AG04450 (cell line): ENCODE measurements at regions of chr4 and their contacts with region 1.

Region 1: DNA sequence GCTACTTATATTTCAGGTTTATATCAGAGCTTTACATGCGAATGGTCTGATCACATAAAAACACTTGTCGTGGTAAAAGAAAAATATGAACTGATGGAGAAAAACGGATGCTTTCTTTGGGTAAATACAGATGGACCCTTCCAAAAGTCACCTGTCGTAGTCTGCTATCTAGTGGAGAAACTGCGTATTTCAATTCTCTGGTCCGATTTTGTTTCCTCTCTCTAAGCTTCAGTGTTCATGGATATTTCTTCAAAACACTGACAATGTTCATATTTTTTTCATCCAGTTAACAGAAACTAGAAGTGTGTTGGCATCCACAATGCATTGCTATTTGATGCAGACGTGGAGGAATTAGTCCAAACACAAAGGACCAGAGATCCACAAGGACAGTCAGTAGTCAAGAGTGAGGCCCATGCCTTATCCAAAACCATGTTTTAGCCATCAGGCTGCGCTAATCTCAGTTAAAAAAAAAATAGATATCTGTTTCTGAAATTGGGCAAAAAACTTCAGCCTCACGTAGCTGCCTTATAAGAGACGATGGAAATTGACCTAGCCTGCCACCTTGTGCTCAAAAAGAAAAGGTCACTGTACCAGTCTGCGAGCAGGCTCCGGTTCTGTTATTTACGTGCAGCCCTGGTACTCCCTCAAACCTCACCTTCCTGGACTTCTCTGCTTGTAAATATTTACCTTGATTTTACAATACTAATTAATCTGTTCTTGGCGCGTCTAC is 16.0 kb downstream of the MEPE start:
- DNase-seq: peak; percentile 11
- H3K4me3 ChIP-seq: no peak overlapping the region
- H3K27ac ChIP-seq: no peak overlapping the region
- H3K27me3 ChIP-seq: peaks cover 2% of the 10 kb centered on the region
- CTCF ChIP-seq: peak; percentile 65

Region 2: DNA sequence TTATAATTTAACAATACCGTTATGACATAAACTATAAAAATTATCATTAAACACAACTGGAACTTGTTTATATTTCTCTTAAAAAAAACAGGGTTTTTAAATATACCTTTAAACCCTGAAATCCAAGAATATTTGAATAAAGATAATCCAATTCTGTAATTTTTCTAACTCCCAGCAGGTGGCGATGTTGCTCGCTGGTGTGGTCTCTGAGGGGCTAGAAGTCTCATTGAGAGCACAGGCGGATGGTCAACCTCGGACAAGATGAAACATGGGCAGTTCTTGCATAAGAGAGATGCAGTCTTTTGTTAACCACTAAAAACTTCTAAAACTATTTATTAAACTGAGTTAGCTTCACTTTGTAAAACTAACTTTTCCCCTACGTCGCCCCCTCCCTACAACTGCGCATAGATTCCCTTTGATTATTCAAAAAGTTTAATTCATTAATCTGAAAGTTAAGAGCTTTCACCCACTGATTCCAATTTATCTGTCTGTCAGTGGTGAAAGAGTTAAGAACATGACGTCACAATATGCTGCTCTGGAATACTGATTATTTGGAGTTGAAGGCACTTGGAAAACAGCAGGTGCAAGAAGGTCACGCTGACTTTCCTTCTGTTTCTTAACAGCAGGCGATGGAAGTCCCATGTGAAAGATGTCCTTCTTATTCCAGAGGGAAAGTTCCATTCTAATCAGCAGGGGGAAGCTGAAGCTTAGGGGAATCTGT is 169.2 kb before region 1 on chr4:
- CTCF ChIA-PET with region 1: interaction called, 147 read pairs
- POLR2A ChIA-PET with region 1: no interaction called
- DNase-seq: peak; percentile 46
- H3K4me3 ChIP-seq: no peak overlapping the region
- H3K27ac ChIP-seq: no peak overlapping the region
- H3K27me3 ChIP-seq: peaks cover 3% of the 10 kb centered on the region
- CTCF ChIP-seq: peak; percentile 79

Region 3: DNA sequence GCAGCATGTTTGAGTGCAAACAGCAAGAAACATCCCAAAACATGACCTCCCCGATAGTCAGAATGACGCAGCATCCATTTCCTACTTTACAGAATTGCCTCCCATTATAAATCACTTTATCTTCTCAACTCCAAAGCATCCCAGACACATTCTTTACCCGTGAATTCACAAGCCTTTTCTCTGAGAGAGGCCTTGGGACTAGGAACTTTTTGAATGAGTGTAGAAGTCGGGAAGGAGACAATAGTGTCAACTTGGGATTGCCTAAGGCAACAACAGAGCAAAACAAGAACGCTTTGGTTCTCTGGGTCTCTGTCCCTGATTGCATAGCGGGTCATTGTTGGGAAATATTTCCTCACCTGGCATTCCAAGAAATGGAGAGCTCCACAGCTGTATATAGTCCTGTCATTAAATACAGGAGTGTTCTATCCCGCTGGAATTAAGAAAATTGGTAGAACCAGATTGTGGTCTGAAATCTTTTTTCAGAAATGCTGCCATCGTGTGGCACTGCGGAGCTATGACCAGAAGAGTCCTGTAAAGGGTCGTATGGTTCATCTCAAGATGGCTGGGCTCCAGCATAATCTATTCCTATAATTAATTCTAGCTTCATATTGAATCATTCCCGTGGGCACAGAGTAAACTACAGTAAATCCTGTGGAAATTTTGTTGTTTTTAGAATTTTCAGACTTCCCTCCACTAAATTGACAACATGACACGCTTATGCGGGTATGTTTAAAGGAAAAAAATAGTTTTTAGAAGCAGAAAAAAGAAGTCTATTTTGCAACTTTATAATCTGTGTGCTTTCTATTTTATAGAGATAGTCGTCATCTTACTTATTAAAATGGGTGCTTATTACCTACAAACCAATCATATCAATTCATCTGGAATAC is 124.7 kb after region 1 on chr4:
- CTCF ChIA-PET with region 1: interaction called, 95 read pairs
- POLR2A ChIA-PET with region 1: interaction called, 3 read pairs
- DNase-seq: peak; percentile 15
- H3K4me3 ChIP-seq: no peak overlapping the region
- H3K27ac ChIP-seq: peak overlapping the region; percentile 54
- H3K27me3 ChIP-seq: no peaks in the 10 kb centered on the region
- CTCF ChIP-seq: peak; percentile 84

Region 4: DNA sequence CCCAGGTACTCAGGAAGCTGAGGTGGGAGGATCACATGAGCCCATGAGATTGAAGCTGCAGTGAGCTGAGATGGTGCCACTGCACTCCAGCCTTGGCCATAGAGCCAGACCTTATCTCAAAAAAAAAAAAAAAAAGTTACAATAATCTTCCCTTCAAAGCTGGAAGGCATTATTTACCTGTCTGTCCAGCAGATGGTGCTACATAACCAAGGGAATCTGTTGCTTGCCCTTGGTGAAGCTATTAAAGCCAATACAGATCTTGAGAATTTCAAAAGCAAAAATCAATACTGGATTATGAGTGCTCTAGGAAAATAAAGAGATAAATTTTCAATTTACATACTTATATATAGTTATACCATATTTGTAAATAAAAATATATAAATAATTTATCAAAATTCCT is 184.5 kb after region 1 on chr4:
- CTCF ChIA-PET with region 1: interaction called, 18 read pairs
- POLR2A ChIA-PET with region 1: no interaction called
- DNase-seq: peak; percentile 39
- H3K4me3 ChIP-seq: no peak overlapping the region
- H3K27ac ChIP-seq: no peak overlapping the region
- H3K27me3 ChIP-seq: no peaks in the 10 kb centered on the region
- CTCF ChIP-seq: peak; percentile 76

Region 5: GRCh38 chr4:88138566-88138965 is 289.8 kb after region 1 on chr4:
- CTCF ChIA-PET with region 1: no interaction called
- POLR2A ChIA-PET with region 1: no interaction called
- DNase-seq: peak; percentile 63
- H3K4me3 ChIP-seq: no peak overlapping the region
- H3K27ac ChIP-seq: no peak overlapping the region
- H3K27me3 ChIP-seq: no peaks in the 10 kb centered on the region
- CTCF ChIP-seq: no peak

Region 6: DNA sequence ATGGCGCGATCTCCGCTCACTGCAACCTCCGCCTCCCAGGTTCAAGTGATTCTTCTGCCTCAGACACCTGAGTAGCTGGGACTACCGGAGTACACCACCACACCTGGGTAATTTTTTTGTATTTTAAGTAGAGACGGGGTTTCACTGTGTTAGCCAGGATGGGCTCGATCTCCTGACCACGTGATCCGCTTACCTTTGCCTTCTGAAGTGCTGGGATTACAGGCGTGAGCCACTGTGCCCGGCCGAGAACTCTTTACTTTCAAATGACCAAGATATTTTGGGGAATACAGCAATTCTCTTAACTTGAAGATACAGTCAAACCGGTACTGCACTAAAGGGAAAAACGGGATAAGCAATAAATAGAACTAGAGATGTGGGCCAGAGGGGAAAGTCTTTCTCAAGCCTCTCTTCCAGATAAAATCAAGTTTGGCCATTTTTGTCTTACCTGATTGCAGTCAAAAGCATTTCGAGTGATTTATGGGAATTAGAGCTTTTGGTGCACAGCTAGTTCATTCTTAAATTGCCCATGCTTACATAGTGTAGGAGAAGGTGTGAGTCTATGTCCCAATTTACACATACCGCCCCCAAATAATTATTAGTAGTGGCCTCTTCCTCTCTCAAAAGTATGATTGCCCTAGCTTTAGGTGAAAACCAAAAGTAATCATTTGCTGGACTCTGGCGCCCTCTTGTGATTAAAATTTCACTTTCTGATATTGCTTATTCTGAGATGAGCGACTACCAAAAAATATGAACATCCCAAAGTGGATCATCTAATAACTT is 362.9 kb after region 1 on chr4:
- CTCF ChIA-PET with region 1: interaction called, 127 read pairs
- POLR2A ChIA-PET with region 1: no interaction called
- DNase-seq: peak; percentile 11
- H3K4me3 ChIP-seq: no peak overlapping the region
- H3K27ac ChIP-seq: no peak overlapping the region
- H3K27me3 ChIP-seq: peaks cover 3% of the 10 kb centered on the region
- CTCF ChIP-seq: peak; percentile 69